Activated CD8-positive, alpha-beta T cell treated with anti-CD3 and anti-CD28 coated beads, Interleukin-2, amount 10 ng/mL, durations not matched to agents 7 days and 5 days (primary cell): ENCODE measurements at regions of chr12 and their contacts with region 1.

Region 1: DNA sequence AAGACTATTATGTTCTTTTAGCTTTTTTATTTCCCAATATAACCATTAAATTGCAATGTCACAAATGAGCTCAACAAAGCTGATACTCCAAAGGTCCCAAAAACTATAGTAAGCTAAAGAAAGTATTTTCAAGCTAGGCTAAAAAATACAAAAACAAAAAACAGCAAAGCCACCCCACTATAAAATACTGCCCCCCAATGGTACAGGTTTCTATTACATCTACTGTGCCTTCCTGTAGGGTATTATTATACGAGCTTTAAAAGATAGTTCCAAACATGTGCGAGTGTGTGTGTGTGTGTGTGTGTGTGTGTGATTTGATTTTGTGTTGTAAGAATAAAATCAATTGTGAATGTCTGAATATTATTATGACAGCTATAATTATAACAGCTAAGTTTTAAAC is 1.1 kb downstream of the IFNG start:
- DNase-seq: peak; percentile 55
- ATAC-seq: peak; percentile 34
- H3K4me3 Mint-ChIP-seq: peak overlapping the region; percentile 60
- H3K27ac Mint-ChIP-seq: peak overlapping the region; percentile 28
- H3K4me1 Mint-ChIP-seq: peaks cover 44% of the 10 kb centered on the region
- H3K27me3 Mint-ChIP-seq: no peaks in the 10 kb centered on the region

Region 2: GRCh38 chr12:68001486-68002466 is 156.7 kb before region 1 on chr12:
- CTCF ChIA-PET with region 1: interaction called, 41 read pairs
- POLR2A ChIA-PET with region 1: interaction called, 3 read pairs
- DNase-seq: no peak
- ATAC-seq: no peak
- H3K4me3 Mint-ChIP-seq: no peak overlapping the region
- H3K27ac Mint-ChIP-seq: no peak overlapping the region
- H3K4me1 Mint-ChIP-seq: peaks cover 11% of the 10 kb centered on the region
- H3K27me3 Mint-ChIP-seq: no peaks in the 10 kb centered on the region

Region 3: DNA sequence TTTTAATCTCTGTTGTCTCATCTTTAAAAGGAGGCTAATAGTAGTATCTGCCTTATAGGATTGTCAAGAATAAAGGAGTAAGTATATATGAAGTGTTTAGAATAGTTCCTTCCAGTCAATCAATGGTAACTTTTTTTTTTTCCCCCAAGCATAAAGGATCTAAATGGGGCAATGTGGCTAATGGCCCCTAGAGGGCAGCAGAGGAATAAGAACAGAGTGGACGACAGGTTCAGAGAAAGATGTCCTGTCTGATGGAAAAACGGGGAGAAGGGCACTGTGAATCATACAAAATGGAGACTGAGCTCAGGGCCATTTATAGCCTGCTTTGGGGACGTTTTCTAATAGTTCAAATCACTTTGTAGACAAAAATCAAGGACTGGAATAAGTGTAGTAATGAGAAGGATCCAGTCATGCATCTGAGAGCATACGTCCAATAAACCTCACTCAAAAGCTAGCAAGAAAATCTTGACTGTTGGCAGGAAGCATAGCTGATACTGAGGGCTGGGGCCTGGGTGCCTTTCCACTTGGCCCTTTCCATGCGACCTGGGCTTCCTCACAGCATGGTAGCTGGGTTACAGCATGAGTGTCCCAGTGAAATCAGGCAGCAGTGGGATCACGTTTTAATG is 117.9 kb before region 1 on chr12:
- CTCF ChIA-PET with region 1: interaction called, 223 read pairs
- POLR2A ChIA-PET with region 1: interaction called, 4 read pairs
- DNase-seq: peak; percentile 76
- ATAC-seq: peak; percentile 72
- H3K4me3 Mint-ChIP-seq: no peak overlapping the region
- H3K27ac Mint-ChIP-seq: no peak overlapping the region
- H3K4me1 Mint-ChIP-seq: peaks cover 45% of the 10 kb centered on the region
- H3K27me3 Mint-ChIP-seq: no peaks in the 10 kb centered on the region

Region 4: GRCh38 chr12:68113644-68114043 is 44.8 kb before region 1 on chr12:
- CTCF ChIA-PET with region 1: interaction called, 134 read pairs
- POLR2A ChIA-PET with region 1: interaction called, 7 read pairs
- DNase-seq: peak; percentile 53
- ATAC-seq: peak; percentile 68
- H3K4me3 Mint-ChIP-seq: no peak overlapping the region
- H3K27ac Mint-ChIP-seq: no peak overlapping the region
- H3K4me1 Mint-ChIP-seq: peaks cover 38% of the 10 kb centered on the region
- H3K27me3 Mint-ChIP-seq: no peaks in the 10 kb centered on the region

Region 5: DNA sequence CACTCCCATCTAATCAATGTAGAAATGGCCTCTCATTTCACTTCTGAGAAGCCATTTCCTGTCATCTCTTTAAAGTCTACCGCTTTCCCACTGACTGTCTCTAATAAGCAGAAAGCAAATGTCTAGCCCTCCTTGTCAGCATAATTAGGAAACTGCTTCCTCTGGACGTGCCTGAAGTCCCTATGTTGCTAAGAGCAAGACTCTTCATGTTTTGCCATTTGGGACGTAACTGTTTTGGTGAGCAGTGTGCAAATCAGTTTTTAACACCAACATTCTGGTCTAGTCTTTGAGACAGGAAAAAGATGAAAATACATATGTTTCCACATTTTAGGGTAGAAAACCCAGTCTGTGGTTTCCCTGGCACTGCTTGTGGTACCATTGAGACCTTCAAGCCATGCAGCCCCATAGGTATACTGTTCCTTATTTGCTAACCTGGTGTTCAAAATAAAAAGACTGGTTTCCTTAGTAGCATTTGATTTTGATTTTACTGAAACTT is 21.0 kb before region 1 on chr12:
- CTCF ChIA-PET with region 1: interaction called, 42 read pairs
- POLR2A ChIA-PET with region 1: interaction called, 3 read pairs
- DNase-seq: peak; percentile 45
- ATAC-seq: peak; percentile 76
- H3K4me3 Mint-ChIP-seq: peak overlapping the region; percentile 40
- H3K27ac Mint-ChIP-seq: peak overlapping the region; percentile 87
- H3K4me1 Mint-ChIP-seq: peaks cover 52% of the 10 kb centered on the region
- H3K27me3 Mint-ChIP-seq: no peaks in the 10 kb centered on the region

Region 6: DNA sequence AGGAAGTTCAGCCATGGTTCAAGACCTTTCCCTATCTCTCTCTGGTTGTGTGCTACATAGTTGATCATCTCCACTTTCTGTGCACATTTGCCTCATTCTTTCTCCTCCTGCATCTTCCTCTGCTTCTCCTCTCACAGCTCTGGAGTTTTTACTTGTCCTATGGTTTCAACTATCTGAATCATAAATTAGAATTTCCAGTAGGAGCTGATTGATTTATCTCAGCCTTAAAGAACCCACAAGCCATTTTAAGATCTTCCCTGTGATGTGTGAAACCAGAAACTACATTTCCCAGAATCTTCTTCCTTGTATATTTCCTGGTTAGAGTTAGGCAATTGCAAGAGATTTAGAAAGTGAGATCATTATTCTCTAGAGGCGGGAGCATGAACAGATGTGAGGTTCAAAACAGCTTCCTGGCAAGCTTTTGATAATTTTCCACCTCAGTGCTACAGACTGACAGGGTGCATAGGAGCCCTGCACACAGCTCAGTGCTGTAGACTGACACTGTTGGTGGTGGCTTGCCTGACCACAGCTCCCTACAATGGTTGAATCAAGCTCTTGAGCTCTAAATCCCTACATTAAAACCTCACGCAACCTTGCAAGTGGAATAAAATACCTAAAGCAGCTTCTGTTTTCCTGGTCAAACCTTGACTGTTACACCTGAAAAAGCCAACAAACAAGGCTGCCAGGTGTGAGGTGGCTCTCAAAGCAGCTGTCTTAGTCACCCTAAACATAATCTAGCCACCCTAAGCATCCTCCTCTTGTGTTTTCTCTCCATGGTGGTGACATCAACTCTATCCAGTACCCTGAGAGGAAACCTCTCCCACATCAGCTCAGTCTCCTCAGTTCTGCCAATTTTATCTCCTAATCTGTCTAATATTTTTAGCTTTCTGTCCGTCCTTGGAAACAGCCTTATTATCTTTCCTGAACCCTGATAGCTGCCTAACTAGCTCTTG is 22.6 kb after region 1 on chr12:
- CTCF ChIA-PET with region 1: interaction called, 22 read pairs
- POLR2A ChIA-PET with region 1: interaction called, 3 read pairs
- DNase-seq: peak; percentile 76
- ATAC-seq: peak; percentile 93
- H3K4me3 Mint-ChIP-seq: peak overlapping the region; percentile 15
- H3K27ac Mint-ChIP-seq: peak overlapping the region; percentile 80
- H3K4me1 Mint-ChIP-seq: peaks cover 55% of the 10 kb centered on the region
- H3K27me3 Mint-ChIP-seq: no peaks in the 10 kb centered on the region

Region 7: DNA sequence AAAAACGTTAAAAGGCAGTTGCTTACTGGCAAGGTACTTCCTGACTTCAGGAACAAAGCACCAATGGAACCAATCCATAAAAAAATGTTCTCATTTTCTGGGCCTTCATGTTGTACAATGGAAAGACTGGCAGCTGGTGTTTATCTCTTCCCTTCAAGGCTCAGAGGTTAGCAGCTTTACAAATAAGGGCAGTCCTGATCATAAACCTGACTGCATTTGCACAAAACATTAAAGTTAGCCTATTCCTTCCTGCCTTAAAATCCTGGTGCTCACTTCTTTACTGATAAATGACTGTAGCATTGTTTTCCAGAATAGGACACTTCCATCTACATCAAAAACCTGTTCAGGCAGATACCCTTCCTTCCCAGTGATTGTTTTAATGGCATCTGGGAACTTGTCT is 48.0 kb after region 1 on chr12:
- CTCF ChIA-PET with region 1: no interaction called
- POLR2A ChIA-PET with region 1: no interaction called
- DNase-seq: no peak
- ATAC-seq: no peak
- H3K4me3 Mint-ChIP-seq: no peak overlapping the region
- H3K27ac Mint-ChIP-seq: no peak overlapping the region
- H3K4me1 Mint-ChIP-seq: peaks cover 24% of the 10 kb centered on the region
- H3K27me3 Mint-ChIP-seq: peaks cover 12% of the 10 kb centered on the region

Region 8: DNA sequence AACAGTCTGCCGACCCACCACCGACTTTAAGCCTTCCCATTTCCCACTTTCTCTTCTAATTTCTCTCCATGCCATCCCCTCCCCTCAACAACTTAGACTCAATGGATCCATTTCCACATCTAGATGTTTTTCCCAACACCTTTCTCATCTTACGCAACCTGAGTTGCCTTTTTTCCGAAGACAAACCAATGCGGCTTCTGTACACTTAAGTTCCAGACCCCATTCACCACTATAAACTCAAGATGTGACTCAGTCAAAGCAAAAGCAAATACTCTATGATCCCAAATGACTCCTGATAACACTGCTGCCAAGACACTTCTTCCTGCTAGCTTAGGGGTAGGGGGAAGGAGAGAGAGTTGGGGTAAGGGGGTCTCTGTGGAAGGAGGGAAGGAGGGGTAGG is 93.6 kb after region 1 on chr12:
- CTCF ChIA-PET with region 1: no interaction called
- POLR2A ChIA-PET with region 1: no interaction called
- DNase-seq: no peak
- ATAC-seq: no peak
- H3K4me3 Mint-ChIP-seq: no peak overlapping the region
- H3K27ac Mint-ChIP-seq: no peak overlapping the region
- H3K4me1 Mint-ChIP-seq: no peaks in the 10 kb centered on the region
- H3K27me3 Mint-ChIP-seq: peaks cover 36% of the 10 kb centered on the region